Activated B cell treated with CpG ODN at 0.5 μM for 24 hours (primary cell): ENCODE measurements at regions of chr10 and their contacts with region 1.

Region 1: DNA sequence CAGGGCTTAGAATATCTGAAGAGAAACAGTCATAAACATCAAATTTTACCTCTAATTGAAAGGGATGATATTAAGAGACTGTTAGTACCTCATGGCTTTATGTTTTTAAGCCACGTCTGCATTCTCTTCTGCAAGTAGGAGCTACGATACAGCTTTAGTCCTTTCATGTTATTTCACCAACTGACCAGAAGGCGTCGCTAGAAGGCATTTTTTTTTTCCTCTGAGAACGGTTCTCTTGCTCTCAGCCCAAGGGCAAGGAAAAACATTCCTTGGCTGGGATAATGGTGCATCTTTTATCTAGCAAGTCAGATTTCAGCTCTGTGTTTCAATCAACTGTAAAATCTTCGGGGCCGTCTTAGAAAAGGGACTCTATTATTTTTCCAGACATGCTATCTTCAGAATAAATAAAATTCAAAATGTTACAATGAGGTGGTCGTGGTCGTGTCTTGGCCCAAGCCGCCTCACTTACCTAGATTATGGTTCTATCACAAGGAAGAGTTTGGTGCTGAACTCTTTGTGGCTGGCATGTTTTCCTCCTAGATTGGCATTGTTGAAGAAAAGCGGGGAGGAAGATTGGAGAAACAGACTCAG is 41.6 kb upstream of the LYZL2 start:
- DNase-seq: no peak
- ATAC-seq: peak; percentile 64
- H3K4me3 Mint-ChIP-seq: peak overlapping the region; percentile 61
- H3K27ac Mint-ChIP-seq: no peak overlapping the region
- H3K4me1 Mint-ChIP-seq: peaks cover 6% of the 10 kb centered on the region
- H3K27me3 Mint-ChIP-seq: peaks cover 16% of the 10 kb centered on the region
- CTCF ChIP-seq: peak; percentile 79

Region 2: GRCh38 chr10:30639946-30640786 is 31.0 kb before region 1 on chr10:
- CTCF ChIA-PET with region 1: interaction called, 10 read pairs
- POLR2A ChIA-PET with region 1: no interaction called
- intact Hi-C with region 1: loop called (anchors 1 kb)
- DNase-seq: no peak
- ATAC-seq: no peak
- H3K4me3 Mint-ChIP-seq: no peak overlapping the region
- H3K27ac Mint-ChIP-seq: no peak overlapping the region
- H3K4me1 Mint-ChIP-seq: no peaks in the 10 kb centered on the region
- H3K27me3 Mint-ChIP-seq: peaks cover 33% of the 10 kb centered on the region
- CTCF ChIP-seq: peak; percentile 69

Region 3: GRCh38 chr10:31808258-31809218 is 1137.4 kb after region 1 on chr10:
- CTCF ChIA-PET with region 1: no interaction called
- POLR2A ChIA-PET with region 1: no interaction called
- intact Hi-C with region 1: loop called (anchors 1 kb)
- DNase-seq: no peak
- ATAC-seq: no peak
- H3K4me3 Mint-ChIP-seq: no peak overlapping the region
- H3K27ac Mint-ChIP-seq: peak overlapping the region; percentile 6
- H3K4me1 Mint-ChIP-seq: peaks cover 7% of the 10 kb centered on the region
- H3K27me3 Mint-ChIP-seq: no peaks in the 10 kb centered on the region
- CTCF ChIP-seq: no peak